AG04450 (cell line): ENCODE measurements at regions of chr22 and their contacts with region 1.

Region 1: GRCh38 chr22:39319270-39320022 is at the start of gene RPL3:
- DNase-seq: peak; percentile 99
- H3K4me3 ChIP-seq: peak within 1 kb of the TSS; percentile 87
- H3K27ac ChIP-seq: peak within 1 kb of the TSS; percentile 98
- H3K27me3 ChIP-seq: no peaks in the 10 kb centered on the region
- CTCF ChIP-seq: peak; percentile 23; the same call in 1 of the 2 replicates
- polyA plus RNA-seq, gene RPL3: 3,445 and 3,813 TPM in 2 replicates

Region 2: GRCh38 chr22:39152511-39153219 is 166.8 kb before region 1 on chr22 and contains the start of gene CBX7:
- CTCF ChIA-PET with region 1: interaction called, 11 read pairs
- POLR2A ChIA-PET with region 1: interaction called, 7 read pairs
- DNase-seq: peak; percentile 47
- H3K4me3 ChIP-seq: peak within 1 kb of the TSS; percentile 65
- H3K27ac ChIP-seq: no peak within 1 kb of the TSS
- H3K27me3 ChIP-seq: peaks cover 32% of the 10 kb centered on the region
- CTCF ChIP-seq: no peak
- polyA plus RNA-seq, gene CBX7: 2.2 and 2.6 TPM in 2 replicates

Region 3: GRCh38 chr22:39306581-39307361 is 12.7 kb before region 1 on chr22:
- CTCF ChIA-PET with region 1: interaction called, 5 read pairs
- POLR2A ChIA-PET with region 1: interaction called, 38 read pairs
- DNase-seq: no peak
- H3K4me3 ChIP-seq: no peak overlapping the region
- H3K27ac ChIP-seq: no peak overlapping the region
- H3K27me3 ChIP-seq: no peaks in the 10 kb centered on the region
- CTCF ChIP-seq: peak; percentile 41

Region 4: DNA sequence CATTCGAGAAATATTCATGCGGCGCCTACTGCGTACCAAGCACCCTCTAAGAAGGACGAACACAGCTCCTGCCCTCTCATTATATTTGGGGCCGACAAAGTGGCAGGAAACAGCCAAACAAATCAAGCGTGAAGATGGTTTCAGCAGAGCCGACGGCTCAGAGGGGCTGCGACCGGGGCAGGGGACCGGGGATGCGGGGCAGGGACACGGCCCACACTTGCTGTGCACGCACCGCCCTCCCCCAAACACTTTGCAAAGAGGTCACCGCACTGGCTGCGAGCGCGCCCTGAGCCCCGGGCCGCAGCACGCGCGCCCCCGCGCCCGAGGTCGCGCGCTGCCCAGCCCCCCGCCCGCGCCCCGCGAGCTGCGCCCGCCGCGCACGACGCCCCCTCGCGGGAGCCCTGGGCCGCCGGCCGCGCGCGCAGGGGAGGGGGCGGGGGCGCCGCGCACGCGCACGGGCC is 30.1 kb after region 1 on chr22:
- CTCF ChIA-PET with region 1: interaction called, 7 read pairs
- POLR2A ChIA-PET with region 1: interaction called, 18 read pairs
- DNase-seq: no peak
- H3K4me3 ChIP-seq: peak overlapping the region; percentile 74
- H3K27ac ChIP-seq: no peak overlapping the region
- H3K27me3 ChIP-seq: peaks cover 2% of the 10 kb centered on the region
- CTCF ChIP-seq: no peak

Region 5: DNA sequence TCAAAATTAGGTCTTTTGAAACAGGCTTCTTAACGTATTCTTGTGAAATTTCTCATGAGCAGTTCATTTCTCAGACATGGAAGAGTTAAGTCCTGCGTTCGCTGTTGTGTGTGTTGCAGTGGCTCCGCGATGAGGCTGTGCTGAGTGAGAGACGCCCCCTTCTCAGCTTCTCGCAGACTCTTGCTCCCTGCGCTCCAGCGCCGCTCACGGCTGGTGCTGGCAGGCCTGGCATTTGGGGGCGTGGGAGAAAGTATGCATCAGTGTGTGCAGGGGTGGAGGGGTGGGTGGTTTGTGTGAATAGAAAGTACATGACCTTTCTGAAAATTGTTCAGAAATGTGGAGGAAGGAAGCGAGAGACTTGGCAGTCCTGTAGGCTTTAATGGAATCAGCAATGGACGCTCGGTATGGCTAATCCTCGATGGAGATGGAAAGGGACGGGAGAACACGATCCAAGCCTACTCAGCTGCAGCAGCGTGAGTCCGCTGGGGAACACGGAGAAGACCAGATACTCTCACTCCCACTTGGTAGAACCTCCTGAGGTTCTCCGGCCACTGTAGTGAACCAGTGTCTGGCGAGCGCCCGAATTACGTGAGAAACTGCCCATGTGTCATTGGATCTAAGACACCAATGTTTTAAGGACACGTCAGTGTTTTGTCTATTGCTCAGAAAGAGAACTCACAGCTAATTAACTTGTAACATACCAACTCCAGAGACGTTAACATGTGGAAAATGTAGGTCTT is 86.1 kb after region 1 on chr22:
- CTCF ChIA-PET with region 1: interaction called, 10 read pairs
- POLR2A ChIA-PET with region 1: interaction called, 12 read pairs
- DNase-seq: no peak
- H3K4me3 ChIP-seq: peak overlapping the region; percentile 27
- H3K27ac ChIP-seq: no peak overlapping the region
- H3K27me3 ChIP-seq: no peaks in the 10 kb centered on the region
- CTCF ChIP-seq: peak; percentile 31; the same call in 1 of the 2 replicates

Region 6: GRCh38 chr22:39502109-39502788 is 182.8 kb after region 1 on chr22 and contains the start of gene MIEF1:
- CTCF ChIA-PET with region 1: no interaction called
- POLR2A ChIA-PET with region 1: interaction called, 12 read pairs
- DNase-seq: peak; percentile 80
- H3K4me3 ChIP-seq: peak within 1 kb of the TSS; percentile 77
- H3K27ac ChIP-seq: no peak within 1 kb of the TSS
- H3K27me3 ChIP-seq: no peaks in the 10 kb centered on the region
- CTCF ChIP-seq: 0 out of 2 replicates have a peak, but pooled peaks have one; percentile 12
- polyA plus RNA-seq, gene MIEF1: 18.9 and 19.2 TPM in 2 replicates

Region 7: GRCh38 chr22:39528681-39529486 is 209.4 kb after region 1 on chr22:
- CTCF ChIA-PET with region 1: interaction called, 28 read pairs
- POLR2A ChIA-PET with region 1: interaction called, 28 read pairs
- DNase-seq: peak; percentile 84
- H3K4me3 ChIP-seq: peak overlapping the region; percentile 29; the same call in 1 of the 2 replicates
- H3K27ac ChIP-seq: no peak overlapping the region
- H3K27me3 ChIP-seq: no peaks in the 10 kb centered on the region
- CTCF ChIP-seq: peak; percentile 99